Right ventricle myocardium inferior (tissue), 1 donor: ENCODE measurements at regions of chr9 and their contacts with region 1.

Region 1: GRCh38 chr9:135743546-135744332 is 41.8 kb downstream of the KCNT1 start:
- DNase-seq: no peak
- ATAC-seq: peak; percentile 74

Region 2: DNA sequence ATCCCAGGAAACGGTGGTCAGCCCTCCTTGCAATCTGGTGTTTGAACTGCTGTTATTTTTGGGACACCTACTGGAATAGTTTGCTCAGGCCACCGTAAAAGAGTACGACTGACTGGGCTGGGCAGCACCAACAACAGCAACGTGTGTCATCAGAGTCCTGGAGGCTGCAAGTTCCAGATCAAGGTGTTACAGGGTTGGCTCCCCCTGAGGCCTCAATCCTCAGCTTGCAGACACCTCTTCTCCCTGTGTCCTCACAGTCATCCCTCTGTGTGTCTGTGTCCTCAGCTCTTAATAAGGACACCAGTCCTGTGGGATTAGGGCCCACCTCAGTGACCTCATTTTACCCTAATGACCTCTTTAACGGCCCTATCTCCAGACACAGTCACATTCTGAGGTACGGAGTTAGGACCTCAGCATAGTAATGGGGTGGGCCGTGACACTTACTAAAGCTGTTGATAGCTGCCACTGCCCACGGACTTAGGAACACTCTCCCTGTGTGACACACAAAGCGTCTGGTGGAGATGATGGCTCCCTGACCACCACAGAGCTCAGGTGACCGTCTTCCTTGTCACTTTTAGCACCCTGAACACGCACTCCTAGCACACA is 121.2 kb before region 1 on chr9:
- intact Hi-C with region 1: no loop called
- DNase-seq: no peak
- ATAC-seq: no peak

Region 3: GRCh38 chr9:135777623-135778177 is 34.0 kb after region 1 on chr9:
- intact Hi-C with region 1: no loop called
- DNase-seq: no peak
- ATAC-seq: no peak

Region 4: GRCh38 chr9:135787776-135788575 is 44.2 kb after region 1 on chr9:
- intact Hi-C with region 1: loop called (anchors 2 kb)
- DNase-seq: no peak
- ATAC-seq: no peak

Region 5: DNA sequence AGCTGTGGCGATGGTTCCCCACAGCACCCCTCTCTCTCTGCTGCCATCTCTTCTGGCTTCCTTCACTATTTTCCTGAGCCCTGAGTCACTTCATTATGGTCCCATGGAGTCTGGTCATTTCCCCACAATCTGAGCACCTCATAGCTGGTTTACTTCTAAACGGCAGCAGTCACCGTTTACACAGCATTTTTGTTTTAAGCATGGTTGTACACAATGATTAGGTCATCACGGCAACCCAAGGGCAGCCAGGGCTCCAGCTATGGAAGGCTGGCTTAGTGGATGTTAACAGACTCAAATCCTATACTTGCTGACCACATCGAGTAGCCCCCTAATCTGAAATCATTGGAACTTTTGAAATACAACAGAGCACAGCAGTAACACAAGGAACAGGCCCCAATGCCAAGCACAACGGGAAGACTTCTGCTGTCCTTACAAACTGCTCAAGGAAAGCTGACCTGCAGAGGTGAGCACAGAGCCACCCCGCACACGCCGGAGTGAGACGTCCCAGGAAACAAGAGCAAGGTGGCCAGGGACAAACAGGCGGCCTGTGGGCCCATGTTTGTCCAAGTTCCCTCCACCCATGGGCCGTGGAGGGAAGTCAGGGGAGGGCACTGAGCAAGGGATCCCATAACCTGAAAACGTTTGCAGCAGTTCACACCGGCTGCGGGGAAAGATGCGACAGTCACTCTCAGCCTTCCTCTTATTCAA is 140.7 kb after region 1 on chr9:
- intact Hi-C with region 1: no loop called
- DNase-seq: no peak
- ATAC-seq: no peak